ENCODE measurements at regions of chr3 and their contacts with region 1.

Region 1: DNA sequence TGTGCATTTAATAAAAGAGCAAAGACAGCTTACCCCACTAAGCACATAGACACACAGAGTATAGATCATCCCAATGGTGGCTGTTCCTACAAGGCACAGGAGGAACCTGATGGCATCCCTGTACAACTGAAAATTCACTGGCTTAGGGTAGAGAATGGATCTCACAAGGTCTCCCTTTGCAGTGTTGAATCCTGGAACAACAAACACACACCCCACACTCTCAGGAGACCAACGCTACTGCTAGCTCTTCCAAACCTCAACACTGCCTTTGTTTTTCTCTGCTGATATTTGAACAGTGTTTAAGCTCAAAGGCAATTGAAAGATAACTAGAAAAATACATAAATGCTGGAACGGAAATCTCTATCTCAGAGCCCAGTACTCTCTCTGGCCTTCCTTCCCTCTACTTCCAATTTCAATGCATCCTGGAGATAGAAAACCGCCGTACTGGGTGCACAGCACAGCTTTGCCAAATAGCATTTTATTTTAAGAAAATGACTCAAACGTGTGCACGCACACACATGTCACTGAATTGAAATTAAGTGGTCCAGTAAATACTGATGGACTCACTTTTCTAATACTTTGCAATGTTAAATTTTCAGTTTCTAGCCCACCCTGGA is 87.5 kb upstream of the ATP13A5 start:
- DNase-seq: no peak

Region 2: GRCh38 chr3:193129601-193130000 is 336.5 kb before region 1 on chr3:
- intact Hi-C with region 1: no loop called
- DNase-seq: no peak

Region 3: GRCh38 chr3:193292386-193292785 is 173.7 kb before region 1 on chr3:
- intact Hi-C with region 1: no loop called
- DNase-seq: no peak

Region 4: GRCh38 chr3:193564012-193564411 is 97.9 kb after region 1 on chr3:
- intact Hi-C with region 1: loop called (anchors 10 kb)
- DNase-seq: peak in 14 of 42 donors; percentile 7 to 70 (median 30)